ENCODE measurements at regions of chr7 and their contacts with region 1.

Region 1: DNA sequence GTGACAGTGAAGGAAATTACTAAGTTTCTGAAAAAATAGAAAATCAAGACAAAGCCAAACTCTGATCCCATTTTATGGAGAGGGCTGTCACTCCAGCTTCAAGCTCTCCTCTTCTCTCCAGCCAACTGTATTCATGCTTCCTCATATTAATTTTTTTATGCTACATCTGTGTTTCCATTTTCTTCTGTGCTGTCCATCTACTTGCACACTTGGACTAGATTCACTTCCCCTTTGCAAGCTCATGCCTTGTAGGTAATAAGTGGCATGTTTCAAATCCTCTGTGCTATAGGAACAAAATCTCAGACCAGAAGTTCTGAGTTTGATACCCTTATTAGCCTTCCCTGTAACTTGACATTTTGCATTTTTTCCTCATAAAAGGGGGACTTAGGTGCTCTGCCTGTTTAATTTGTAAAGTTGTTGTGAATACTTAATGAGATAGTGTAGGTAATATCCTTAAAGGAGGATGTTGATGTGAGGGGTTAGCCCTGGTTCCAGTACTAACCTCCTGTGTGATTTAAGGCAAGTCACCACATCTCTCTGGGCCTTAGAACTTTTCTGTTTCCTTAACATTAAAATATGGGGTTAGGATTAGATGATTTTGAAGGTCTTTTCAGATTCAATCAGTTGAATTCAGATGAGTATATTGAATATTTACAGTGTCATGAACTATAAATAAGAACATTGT is 358.8 kb downstream of the BBS9 start:
- DNase-seq: no peak
- H3K4me3 ChIP-seq: no peak overlapping the region
- CTCF ChIP-seq: no peak

Region 2: GRCh38 chr7:33459340-33459751 is 28.8 kb before region 1 on chr7:
- in situ Hi-C with region 1: no loop called
- DNase-seq: peak; percentile 19
- H3K4me3 ChIP-seq: no peak overlapping the region
- CTCF ChIP-seq: peak; percentile 66

Region 3: DNA sequence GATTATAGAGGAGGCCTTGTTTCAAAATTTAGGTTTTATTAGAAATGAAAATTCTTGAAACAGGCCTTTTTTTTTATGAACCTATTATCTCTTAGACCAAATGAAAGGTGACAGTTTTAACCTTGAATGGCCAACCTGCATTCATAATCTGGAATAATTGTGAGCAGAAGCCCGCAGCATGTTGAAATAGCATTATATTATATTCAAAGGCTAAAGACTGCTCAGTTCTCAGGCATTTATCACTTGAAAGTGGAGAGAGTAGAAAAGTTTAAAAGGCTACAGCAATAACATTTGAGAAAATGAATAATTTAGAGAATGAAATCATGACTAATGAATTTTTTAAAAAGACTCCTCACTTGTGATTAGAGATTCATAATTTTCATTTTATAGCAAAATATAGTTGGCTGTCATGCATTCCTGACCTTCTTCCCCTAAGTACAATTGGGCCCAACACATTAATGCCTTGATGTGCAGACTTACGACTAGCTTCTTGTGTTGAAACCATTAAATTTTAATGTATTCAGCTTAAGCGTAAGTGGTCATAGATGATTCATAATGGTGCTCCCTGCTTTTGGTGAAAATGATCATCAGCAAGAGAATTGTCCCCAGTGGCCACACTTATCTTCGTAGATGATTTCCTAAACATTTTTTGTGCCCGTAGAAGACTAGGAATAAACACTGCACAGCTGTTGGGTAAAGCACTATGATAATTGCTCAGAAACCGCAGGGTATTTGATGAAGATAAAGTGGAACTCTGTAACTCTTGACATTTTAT is 70.6 kb after region 1 on chr7:
- in situ Hi-C with region 1: loop called (anchors 5 kb)
- DNase-seq: no peak
- H3K4me3 ChIP-seq: no peak overlapping the region
- CTCF ChIP-seq: no peak

Measured in astrocyte of the cerebellum (primary cell).